HEK293 (cell line): ENCODE measurements at regions of chr17 and their contacts with region 1.

Region 1: GRCh38 chr17:17496189-17497064 is at the start of gene RASD1:
- H3K4me3 ChIP-seq: peak within 1 kb of the TSS; percentile 64
- H3K27ac ChIP-seq: peak within 1 kb of the TSS; percentile 64
- H3K4me1 ChIP-seq: no peaks in the 10 kb centered on the region
- CTCF ChIP-seq: 0 out of 2 replicates have a peak, but pooled peaks have one; percentile 25

Region 2: GRCh38 chr17:17445925-17446665 is 50.3 kb before region 1 on chr17:
- CTCF ChIA-PET with region 1: interaction called, 6 read pairs
- POLR2A ChIA-PET with region 1: interaction called, 11 read pairs
- H3K4me3 ChIP-seq: no peak overlapping the region
- H3K27ac ChIP-seq: peak overlapping the region; percentile 38; the same call in 1 of the 2 replicates
- H3K4me1 ChIP-seq: peaks cover 12% of the 10 kb centered on the region
- CTCF ChIP-seq: no peak

Region 3: DNA sequence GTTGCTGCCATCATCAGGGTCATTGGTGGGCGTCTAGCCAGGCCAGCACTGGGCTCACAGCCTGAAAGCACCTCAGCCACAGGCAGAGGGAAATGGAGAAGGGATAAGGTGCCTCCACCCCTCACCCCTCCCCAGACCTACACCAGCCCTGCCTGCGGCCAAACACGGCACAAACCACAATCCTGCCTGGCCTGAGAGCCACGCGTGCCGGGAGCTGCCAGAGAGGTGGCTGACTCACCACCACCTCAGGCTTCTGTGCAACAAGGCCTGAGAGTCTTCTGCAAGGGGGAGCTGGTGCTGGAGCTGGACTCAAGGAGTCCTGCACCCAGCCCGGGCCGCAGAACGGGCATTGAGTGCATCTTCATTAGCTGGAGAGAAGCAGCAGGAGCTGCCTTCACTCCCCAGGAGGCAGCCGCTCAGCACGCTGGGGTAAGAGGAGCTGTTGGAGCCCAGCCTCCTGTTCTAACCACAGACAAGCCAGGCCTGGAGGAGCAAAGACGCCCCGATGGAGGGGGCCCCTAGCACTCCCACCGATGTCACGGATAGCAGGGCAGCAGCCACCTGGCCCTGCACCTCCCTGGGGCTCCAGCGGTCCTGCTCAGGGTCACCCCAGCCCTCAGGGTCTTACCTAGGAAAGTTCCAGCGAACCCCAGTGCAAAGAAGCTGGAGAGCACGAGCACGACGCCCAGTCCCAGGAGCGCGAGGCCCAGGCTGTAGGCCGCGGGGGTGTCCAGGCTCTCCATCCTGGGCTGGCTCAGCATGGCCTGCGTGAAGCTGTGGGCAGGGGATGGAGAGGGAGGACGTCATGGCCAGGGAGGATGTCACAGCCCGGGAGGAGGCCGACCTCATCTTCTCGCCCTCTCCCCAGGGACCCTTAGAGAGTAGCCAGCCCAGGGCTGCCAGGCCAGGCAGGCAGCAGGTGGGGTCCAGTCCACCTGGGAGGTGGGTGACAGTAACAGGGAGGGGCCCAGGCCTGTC is 15.7 kb after region 1 on chr17:
- CTCF ChIA-PET with region 1: interaction called, 19 read pairs
- POLR2A ChIA-PET with region 1: interaction called, 13 read pairs
- H3K4me3 ChIP-seq: no peak overlapping the region
- H3K27ac ChIP-seq: no peak overlapping the region
- H3K4me1 ChIP-seq: no peaks in the 10 kb centered on the region
- CTCF ChIP-seq: no peak

Region 4: DNA sequence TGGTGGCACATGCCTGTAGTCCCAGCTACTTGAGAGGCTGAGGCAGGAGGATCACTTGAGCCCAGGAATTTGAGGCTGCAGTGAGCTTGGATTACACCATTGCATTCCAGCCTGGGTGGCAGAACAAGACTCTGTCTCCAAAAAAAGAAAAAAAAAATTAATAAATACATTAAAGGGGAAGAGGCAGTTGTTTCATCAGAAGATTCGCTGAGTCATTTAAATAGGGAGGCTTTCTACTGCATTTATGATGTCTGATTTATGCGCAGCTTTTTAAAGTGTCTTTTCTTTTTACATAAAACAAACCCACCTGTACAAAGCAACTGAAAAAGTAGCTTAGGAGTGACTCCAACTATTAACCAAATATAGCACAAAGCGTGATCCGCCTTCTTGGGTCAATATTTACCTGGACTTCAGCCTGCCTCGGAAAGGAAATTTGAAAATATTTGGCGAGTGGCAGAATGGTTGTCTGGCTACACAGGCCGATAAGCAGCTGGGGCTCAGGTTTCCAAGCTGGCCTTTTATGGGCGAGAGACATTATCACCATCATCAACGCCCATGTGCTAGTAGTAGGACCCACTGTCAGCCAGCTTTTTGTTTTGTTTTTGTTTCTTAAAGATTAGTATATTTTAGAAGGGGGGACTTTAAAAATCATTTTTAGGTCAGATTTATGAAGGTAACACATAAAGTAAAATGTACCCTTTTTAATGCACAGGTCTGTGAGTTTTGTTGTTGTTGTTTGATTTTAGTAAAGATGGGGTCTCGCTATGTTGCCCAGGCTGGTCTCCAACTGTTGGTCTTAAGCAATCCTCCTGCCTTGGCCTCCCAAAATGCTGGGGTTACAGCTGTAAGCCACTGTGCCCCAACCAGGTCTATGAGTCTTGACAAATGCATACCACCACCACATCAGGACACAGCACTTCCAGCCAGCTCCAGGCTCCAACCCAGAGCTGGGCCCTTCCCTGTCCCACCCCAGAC is 42.3 kb after region 1 on chr17:
- CTCF ChIA-PET with region 1: interaction called, 16 read pairs
- POLR2A ChIA-PET with region 1: interaction called, 12 read pairs
- H3K4me3 ChIP-seq: no peak overlapping the region
- H3K27ac ChIP-seq: no peak overlapping the region
- H3K4me1 ChIP-seq: peaks cover 7% of the 10 kb centered on the region
- CTCF ChIP-seq: no peak

Region 5: DNA sequence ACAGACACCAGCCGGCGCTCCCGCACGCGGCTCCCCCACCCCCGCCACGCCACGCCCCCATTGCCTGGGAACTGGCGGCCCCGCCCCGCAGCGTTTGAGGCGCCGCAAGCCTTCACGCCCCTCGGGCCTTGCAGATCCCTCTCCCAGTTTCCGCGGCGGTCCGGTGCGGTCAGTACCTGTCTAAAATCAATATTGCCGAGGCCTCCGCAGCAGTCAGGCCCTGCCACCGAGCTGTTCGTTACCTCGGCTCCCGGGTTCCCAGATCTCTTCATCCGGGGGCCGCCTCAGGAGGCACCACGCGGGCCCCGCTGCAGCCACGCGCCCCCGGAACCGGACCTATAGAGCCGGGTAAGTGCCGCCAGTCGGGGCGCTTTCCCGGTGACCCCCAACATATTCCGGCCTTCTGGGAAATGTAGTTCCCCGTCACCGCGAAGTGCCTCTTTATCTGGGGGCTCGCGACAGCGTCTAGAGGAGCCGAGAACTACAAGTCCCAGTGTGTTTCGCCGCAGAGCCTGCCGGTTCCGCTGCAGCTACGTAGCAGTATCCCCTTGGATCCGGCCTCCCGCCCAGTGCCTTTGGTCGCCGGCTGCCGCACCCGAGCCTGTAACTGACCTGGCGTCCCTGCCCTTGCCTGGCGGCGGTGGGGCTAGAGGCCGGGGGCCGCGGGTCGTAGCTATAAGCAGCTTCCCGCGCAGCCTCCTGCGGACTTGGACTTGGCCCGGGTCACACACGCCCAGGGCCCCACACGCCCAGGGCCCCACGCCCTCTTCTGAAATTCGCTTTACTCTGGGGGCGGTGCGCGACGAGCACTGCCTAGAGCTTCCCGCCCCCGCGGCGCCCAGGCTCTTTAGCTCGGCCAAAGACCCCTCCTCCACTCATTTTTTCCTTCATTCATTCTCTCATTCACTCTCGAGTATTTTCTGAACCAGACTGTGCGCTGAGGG is 95.2 kb after region 1 on chr17 and contains the start of gene PEMT:
- CTCF ChIA-PET with region 1: interaction called, 4 read pairs
- POLR2A ChIA-PET with region 1: interaction called, 21 read pairs
- H3K4me3 ChIP-seq: peak within 1 kb of the TSS; percentile 54
- H3K27ac ChIP-seq: peak within 1 kb of the TSS; percentile 70
- H3K4me1 ChIP-seq: peaks cover 7% of the 10 kb centered on the region; the same call in 1 of the 2 replicates
- CTCF ChIP-seq: no peak

Region 6: DNA sequence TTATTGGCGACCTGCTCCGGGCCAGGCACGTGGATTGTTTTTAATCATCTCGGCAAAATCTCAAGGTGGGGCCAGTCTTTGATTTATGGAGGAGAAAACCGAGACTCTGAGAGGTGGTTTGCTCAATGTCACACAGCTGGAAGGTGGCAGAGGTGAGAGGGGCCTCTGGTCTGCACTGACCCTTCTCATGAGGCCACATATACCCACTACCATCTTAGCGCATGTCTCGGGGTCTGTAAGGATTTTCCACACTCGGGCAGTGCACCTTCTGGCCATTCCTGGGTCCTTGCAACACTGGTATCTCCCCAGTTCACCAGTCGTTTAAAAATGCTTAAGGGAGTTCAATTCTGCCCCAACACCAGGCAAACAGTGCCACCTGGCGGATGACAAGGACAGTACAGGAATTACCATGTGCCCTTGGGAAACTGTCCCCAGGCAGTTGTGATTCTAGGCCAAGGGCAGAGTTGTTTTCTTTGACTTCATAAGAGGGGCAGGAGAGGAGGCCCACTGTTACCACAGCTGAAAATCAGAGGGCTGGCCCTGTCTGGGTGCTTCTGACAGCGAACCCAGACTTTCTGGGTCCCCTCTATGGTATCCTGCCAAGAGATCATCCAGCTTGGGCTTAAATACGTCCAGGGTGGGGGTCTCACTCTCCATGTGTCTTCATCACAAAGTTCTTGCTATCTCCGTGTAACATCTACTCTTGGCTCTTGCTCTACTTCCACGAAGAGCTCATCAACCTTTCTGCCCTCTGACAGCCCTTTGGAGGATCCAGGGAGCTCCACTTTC is 145.4 kb after region 1 on chr17:
- CTCF ChIA-PET with region 1: interaction called, 14 read pairs
- POLR2A ChIA-PET with region 1: interaction called, 25 read pairs
- H3K4me3 ChIP-seq: no peak overlapping the region
- H3K27ac ChIP-seq: no peak overlapping the region
- H3K4me1 ChIP-seq: no peaks in the 10 kb centered on the region
- CTCF ChIP-seq: peak; percentile 88